Colonic mucosa (tissue), 4 donors: ENCODE measurements at regions of chr2 and their contacts with region 1.

Region 1: GRCh38 chr2:137910641-137911040 is 53.6 kb upstream of the HNMT start:
- DNase-seq: no peak
- H3K4me3 ChIP-seq: no peak overlapping the region
- H3K27ac ChIP-seq: no peak overlapping the region
- H3K4me1 ChIP-seq: no peaks in the 10 kb centered on the region
- H3K27me3 ChIP-seq: no peaks in the 10 kb centered on the region
- CTCF ChIP-seq: peak; percentile 68

Region 2: DNA sequence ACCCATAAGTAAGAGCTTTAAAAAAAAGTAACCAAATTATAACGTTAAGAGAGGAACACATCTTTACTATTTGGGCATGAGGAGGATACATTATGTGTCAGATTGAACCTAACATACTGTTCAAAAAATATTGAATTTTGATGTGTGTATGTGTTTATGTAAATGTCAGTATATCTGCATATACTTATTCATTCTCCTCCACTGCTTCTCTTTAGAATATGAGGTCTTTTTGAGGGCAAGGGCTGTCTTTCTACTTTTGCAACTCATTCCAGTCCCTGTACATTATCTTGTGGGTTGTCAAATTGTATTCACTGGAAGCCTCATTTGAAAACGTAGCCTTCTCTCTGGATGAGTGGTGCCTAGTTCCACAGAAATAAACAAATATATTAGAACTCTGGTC is 455.8 kb before region 1 on chr2:
- intact Hi-C with region 1: no loop called
- DNase-seq: no peak
- H3K4me3 ChIP-seq: no peak overlapping the region
- H3K27ac ChIP-seq: no peak overlapping the region
- H3K4me1 ChIP-seq: no peaks in the 10 kb centered on the region
- H3K27me3 ChIP-seq: no peaks in the 10 kb centered on the region
- CTCF ChIP-seq: no peak

Region 3: DNA sequence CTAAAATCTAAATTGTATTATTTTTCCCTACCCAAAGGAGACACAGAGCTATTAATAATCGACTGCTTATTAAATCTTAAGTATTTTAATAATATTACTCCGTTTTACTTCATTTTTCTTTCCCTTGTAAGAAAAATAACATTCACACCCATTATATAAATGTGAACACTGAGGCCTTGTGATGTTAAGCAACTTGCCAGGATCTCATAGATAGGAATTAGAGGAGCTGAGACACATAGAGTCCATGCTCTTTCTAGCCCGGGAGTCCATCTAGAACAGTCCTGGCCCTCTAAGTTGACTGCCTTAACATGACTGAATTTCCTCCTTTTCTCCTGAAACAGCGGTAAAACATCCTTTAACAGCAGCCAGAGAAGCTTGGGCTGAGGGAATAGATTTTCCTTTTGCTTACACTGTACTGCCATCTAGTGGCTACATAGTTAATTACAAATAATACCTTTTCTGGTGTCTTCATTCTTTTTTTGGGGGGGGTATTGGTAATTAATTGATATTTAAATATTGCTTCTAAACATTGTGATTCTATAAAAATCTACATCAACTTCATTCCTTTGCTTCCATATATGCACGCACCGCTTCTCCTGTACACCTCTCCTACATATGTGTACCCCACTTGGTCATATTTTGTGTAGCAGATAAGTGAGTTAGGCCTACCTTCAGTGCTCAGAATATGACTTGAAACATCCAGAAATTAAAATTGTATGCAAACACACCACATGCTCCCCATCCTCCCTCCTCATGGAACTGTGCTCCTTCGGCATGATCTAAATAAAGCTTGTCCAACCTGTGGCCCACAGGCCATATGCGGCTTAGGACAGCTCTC is 72.2 kb before region 1 on chr2:
- intact Hi-C with region 1: no loop called
- DNase-seq: no peak
- H3K4me3 ChIP-seq: no peak overlapping the region
- H3K27ac ChIP-seq: no peak overlapping the region
- H3K4me1 ChIP-seq: no peaks in the 10 kb centered on the region
- H3K27me3 ChIP-seq: no peaks in the 10 kb centered on the region
- CTCF ChIP-seq: peak; percentile 55

Region 4: GRCh38 chr2:138122142-138123003 is 211.7 kb after region 1 on chr2:
- intact Hi-C with region 1: no loop called
- DNase-seq: peak; percentile 49
- H3K4me3 ChIP-seq: no peak overlapping the region
- H3K27ac ChIP-seq: no peak overlapping the region
- H3K4me1 ChIP-seq: no peaks in the 10 kb centered on the region
- H3K27me3 ChIP-seq: no peaks in the 10 kb centered on the region
- CTCF ChIP-seq: no peak

Region 5: DNA sequence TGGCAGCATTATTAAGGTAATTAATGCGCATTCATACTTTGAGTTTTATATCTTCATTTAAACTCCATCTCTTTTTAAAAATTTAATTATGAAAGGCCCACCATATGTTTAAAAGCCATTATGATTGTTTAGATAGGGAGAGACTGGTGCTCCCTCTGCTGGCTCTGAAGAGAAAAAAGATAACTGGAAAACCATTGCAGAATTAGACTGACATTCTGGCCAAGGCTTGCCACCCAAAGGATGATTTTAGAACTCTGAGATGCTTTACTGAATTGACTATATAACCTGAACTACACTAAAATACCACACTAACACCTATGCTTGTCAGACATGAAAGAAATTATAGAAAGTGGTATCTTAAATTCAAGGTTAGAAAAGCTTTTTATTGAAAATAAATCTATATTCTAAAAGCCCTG is 463.4 kb after region 1 on chr2:
- intact Hi-C with region 1: loop called (anchors 10 kb)
- DNase-seq: no peak
- H3K4me3 ChIP-seq: no peak overlapping the region
- H3K27ac ChIP-seq: no peak overlapping the region
- H3K4me1 ChIP-seq: no peaks in the 10 kb centered on the region
- H3K27me3 ChIP-seq: no peaks in the 10 kb centered on the region
- CTCF ChIP-seq: peak; percentile 42

Region 6: DNA sequence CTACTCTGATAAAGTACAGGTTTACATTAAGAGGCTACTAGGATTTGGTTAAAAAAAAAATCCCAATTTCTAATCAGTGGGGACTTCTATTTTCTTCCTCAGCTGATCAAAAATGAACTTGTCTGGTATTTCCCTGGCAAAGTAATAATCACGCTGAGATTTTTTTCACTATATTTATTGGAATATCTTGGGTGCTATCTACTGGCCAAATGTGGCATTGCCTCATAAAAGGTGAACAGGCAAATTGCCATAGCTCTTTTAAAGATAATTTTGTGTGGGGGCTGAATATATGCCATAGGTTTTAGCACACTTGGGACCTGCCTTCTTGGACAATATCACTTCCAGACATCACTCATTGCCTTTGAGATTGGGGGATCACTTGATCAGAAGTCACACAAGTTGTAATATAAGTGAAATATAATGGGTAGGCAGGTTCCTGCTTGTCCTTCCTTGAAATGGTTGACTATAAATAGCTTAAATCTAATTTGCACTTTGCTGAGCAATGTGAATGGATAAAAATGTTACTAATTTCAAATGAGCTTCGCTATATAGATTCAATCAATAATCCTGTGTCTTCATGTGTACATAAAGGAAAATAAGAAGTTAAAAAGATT is 876.5 kb after region 1 on chr2:
- intact Hi-C with region 1: loop called (anchors 5 kb)
- DNase-seq: no peak
- H3K4me3 ChIP-seq: no peak overlapping the region
- H3K27ac ChIP-seq: no peak overlapping the region
- H3K4me1 ChIP-seq: no peaks in the 10 kb centered on the region
- H3K27me3 ChIP-seq: peaks cover under 1% of the 10 kb centered on the region
- CTCF ChIP-seq: peak; percentile 52

Region 7: DNA sequence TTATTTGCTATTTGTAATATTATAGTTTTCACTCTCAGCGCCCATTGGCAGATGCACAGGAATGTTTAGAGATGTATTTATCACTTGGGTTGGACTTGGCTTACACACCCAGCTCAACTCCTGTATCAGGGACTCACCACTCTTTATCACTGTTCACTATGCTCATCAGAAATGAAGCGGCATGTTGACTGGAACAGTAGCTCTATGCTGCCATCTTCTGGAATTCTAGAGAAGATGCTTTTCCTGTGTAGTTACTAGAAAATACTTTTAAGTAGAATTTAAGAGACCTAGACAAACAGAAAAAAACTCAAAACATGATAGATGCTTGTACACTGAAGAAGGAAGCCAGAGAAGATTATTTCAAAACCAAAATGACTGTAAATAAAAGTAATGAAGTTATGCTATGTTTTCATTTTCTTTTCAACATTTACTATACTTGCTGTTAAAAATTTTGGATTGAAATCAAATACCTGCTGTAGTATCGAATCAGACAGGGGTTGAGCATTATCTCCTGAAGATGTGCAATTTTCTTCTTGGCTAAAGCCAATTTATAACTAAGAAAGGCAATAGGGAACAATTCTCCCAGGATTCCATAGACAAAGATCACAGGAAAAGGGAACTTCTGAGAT is 916.9 kb after region 1 on chr2:
- intact Hi-C with region 1: loop called (anchors 5 kb)
- DNase-seq: no peak
- H3K4me3 ChIP-seq: no peak overlapping the region
- H3K27ac ChIP-seq: no peak overlapping the region
- H3K4me1 ChIP-seq: no peaks in the 10 kb centered on the region
- H3K27me3 ChIP-seq: no peaks in the 10 kb centered on the region
- CTCF ChIP-seq: peak; percentile 68